ENCODE measurements at regions of chr15 and their contacts with region 1.

Region 1: GRCh38 chr15:57146506-57147201 is 228.2 kb downstream of the TCF12 start:
- DNase-seq: no peak
- H3K4me3 ChIP-seq: peak overlapping the region; percentile 16; the same call in 1 of the 2 replicates
- CTCF ChIP-seq: peak; percentile 47

Region 2: GRCh38 chr15:56491110-56491722 is 655.4 kb before region 1 on chr15:
- CTCF ChIA-PET with region 1: interaction called, 11 read pairs
- POLR2A ChIA-PET with region 1: no interaction called
- DNase-seq: peak; percentile 36
- H3K4me3 ChIP-seq: no peak overlapping the region
- CTCF ChIP-seq: peak; percentile 91

Region 3: DNA sequence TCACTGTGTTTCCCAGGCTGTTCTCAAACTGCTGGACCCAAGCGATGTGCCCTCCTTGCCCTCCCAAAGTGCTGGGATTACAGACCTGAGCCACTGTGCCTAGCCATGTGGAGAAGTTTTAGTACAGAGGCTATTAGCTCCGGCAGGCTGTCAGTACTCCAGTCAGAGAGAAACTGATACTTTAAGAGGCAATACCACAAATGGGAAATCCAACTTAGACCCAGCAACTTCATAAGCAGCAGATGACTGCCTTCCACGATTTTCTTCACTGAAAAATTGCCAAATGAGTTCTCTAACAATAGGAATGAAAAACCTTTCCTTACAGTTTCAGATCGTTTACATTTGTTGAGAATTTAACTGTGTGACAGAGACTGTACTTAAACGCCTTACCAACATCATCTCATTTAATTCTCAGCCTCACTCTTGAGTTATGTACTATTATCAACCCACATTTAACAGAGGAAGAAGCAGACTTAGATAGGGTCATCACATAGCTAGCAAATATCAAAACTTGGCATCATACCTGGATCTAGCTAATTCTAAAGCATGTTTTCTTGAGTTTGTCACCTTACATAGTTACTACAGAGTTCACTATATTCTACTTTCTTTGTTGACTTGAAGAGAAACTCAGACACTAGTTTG is 100.8 kb before region 1 on chr15:
- CTCF ChIA-PET with region 1: no interaction called
- POLR2A ChIA-PET with region 1: no interaction called
- DNase-seq: no peak
- H3K4me3 ChIP-seq: no peak overlapping the region
- CTCF ChIP-seq: no peak

Region 4: GRCh38 chr15:57133127-57133968 is 13.3 kb before region 1 on chr15:
- CTCF ChIA-PET with region 1: interaction called, 22 read pairs
- POLR2A ChIA-PET with region 1: interaction called, 3 read pairs
- DNase-seq: no peak
- H3K4me3 ChIP-seq: no peak overlapping the region
- CTCF ChIP-seq: no peak

Region 5: GRCh38 chr15:57213862-57214261 is 67.2 kb after region 1 on chr15:
- CTCF ChIA-PET with region 1: interaction called, 122 read pairs
- POLR2A ChIA-PET with region 1: no interaction called
- DNase-seq: no peak
- H3K4me3 ChIP-seq: no peak overlapping the region
- CTCF ChIP-seq: peak; percentile 12

Region 6: DNA sequence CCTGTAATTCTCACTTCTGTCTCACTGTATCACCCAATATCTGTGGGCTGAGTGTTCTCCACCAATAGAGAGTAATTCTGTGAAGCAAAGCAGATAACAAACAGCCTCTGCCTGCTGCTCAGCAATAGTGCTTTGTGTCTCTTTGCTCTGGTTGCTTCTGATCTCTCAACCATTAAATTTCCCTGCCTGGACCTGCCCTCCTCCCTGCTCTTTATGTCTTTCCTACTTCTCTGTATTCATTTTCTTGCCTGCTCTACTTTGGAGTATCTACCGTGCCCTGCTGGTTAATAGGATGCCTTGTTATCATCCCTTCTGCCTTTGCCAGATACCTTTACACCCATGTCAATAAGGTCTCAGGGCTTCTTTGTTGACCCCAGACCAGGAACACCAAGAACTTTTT is 126.7 kb after region 1 on chr15:
- CTCF ChIA-PET with region 1: interaction called, 10 read pairs
- POLR2A ChIA-PET with region 1: no interaction called
- DNase-seq: no peak
- H3K4me3 ChIP-seq: no peak overlapping the region
- CTCF ChIP-seq: no peak

Region 7: GRCh38 chr15:57306161-57306943 is 159.7 kb after region 1 on chr15:
- CTCF ChIA-PET with region 1: interaction called, 172 read pairs
- POLR2A ChIA-PET with region 1: interaction called, 3 read pairs
- DNase-seq: no peak
- H3K4me3 ChIP-seq: peak overlapping the region; percentile 58
- CTCF ChIP-seq: peak; percentile 91

Region 8: GRCh38 chr15:57527382-57528091 is 380.9 kb after region 1 on chr15:
- CTCF ChIA-PET with region 1: interaction called, 44 read pairs
- POLR2A ChIA-PET with region 1: no interaction called
- DNase-seq: peak; percentile 65
- H3K4me3 ChIP-seq: no peak overlapping the region
- CTCF ChIP-seq: peak; percentile 42